Transverse colon (tissue), 4 donors: ENCODE measurements at regions of chr22 and their contacts with region 1.

Region 1: DNA sequence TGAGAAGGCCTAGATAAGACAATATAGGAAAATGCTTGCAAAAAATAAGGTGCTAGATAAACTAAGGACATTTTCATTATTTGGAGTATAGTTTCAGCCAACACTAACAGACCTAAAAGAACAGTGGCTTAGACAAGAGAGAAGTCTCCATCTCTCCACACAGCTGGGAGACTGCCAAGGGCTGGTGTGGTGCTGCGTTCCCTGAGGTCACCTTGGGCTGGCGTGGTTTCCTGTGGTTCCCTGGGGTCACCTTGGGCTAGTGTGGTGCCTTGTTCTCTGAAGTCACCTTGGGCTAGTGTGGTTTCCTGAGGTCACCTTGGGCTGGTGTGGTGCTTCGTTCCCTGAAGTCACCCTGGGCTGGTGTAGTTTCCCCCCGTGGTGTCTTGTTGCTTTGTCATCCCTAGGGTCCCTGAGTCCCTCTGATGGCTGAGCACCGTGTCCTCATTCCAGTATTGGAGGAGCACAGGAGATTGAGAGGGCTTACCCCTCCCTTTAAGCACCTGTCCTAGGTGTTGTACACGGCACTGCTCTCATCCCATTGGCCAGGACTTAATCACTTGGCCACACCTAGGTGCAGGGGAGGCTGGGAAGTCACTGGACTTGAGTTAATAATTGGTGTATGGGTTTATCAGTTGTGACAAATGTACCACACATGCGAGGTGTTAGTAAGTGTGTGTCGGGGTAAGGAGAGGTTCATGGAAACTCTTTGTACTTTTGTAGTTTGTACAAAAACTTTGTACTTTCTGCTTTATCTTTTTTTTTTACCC is 14.9 kb downstream of the SAMM50 start:
- DNase-seq: no peak
- H3K4me3 ChIP-seq: no peak overlapping the region
- H3K27ac ChIP-seq: no peak overlapping the region
- H3K4me1 ChIP-seq: no peaks in the 10 kb centered on the region
- H3K27me3 ChIP-seq: no peaks in the 10 kb centered on the region
- CTCF ChIP-seq: no peak
- EP300 ChIP-seq: no peak
- POLR2A ChIP-seq: no peak

Region 2: DNA sequence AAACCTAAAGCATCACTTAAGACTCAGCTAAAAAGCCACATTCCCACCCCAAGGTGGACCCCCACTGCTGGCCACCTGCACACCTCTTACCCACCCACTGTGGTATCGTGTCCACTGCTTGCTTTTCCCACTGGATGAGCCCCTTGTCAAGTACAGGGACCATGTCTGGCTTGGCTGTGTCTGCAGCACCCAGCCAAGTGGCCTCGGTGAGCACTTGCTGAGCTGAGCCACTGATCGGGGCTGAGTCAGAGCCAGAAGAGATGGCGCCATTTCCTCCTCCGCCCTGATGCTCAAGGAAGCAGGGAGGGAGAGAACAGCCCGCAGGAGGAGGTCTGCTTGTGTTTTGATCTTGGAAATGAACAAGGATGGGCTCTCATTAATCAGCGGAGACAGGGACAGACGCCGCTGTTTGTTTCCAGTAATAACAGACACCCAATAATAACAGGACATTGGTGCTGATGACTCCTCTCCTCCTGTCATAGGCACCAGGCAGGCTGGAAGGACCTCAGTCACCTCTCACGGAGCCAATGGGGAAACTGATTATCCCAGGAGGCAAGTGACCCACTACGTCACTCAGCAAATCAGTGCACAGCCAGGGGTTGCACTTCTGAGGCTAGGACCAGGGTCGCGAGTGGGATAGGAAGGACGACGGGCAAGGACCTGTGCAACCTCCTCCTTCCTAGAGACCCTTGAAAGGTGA is 613.0 kb after region 1 on chr22:
- in situ Hi-C with region 1: no loop called
- intact Hi-C with region 1: no loop called
- DNase-seq: no peak
- H3K4me3 ChIP-seq: no peak overlapping the region
- H3K27ac ChIP-seq: no peak overlapping the region
- H3K4me1 ChIP-seq: no peaks in the 10 kb centered on the region
- H3K27me3 ChIP-seq: peaks cover 33% of the 10 kb centered on the region
- CTCF ChIP-seq: no peak
- EP300 ChIP-seq: no peak
- POLR2A ChIP-seq: no peak

Region 3: GRCh38 chr22:45045208-45045607 is 1075.0 kb after region 1 on chr22:
- in situ Hi-C with region 1: no loop called
- intact Hi-C with region 1: loop called (anchors 5 kb)
- DNase-seq: no peak
- H3K4me3 ChIP-seq: no peak overlapping the region
- H3K27ac ChIP-seq: no peak overlapping the region
- H3K4me1 ChIP-seq: no peaks in the 10 kb centered on the region
- H3K27me3 ChIP-seq: peaks cover 14% of the 10 kb centered on the region
- CTCF ChIP-seq: no peak
- EP300 ChIP-seq: no peak
- POLR2A ChIP-seq: no peak